Panc1 (cell line): ENCODE measurements at regions of chr3 and their contacts with region 1.

Region 1: DNA sequence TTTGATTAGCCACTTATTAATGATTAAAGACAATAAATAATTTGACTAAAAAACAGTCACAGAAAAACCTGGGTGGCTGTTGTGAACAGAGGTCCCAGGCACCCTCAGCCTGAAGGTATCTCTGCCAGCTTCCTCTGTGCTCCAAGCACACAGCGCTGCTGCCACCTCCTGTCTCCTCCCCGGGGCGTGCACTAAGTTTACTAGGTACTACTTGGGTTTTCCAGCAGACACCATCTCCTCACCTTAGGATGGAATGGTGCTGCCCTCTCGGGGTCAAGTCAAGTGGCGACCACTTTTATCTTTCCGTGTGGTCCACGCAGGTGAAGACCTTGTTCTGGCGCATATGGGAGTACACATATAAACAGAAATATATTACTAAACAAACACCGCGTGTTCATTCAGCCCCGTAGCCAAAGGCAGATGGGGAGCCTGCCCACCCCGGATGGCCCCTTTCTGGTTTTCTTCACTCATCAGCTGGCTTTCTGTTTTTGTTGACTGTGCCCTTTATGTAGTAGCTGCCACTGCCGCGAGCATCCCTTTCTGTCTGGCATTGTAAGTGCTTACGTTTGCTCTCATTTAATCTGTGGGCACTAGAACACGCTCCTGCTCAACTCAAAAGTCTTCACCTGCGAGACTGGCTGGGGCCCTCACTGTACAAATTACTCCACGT is 128.0 kb downstream of the LRIG1 start:
- DNase-seq: no peak
- ATAC-seq: peak; percentile 51; the same call in 1 of the 2 replicates
- H3K4me3 ChIP-seq: no peak overlapping the region
- H3K27ac ChIP-seq: no peak overlapping the region
- H3K4me1 ChIP-seq: no peaks in the 10 kb centered on the region
- H3K27me3 ChIP-seq: no peaks in the 10 kb centered on the region
- CTCF ChIP-seq: peak; percentile 26

Region 2: GRCh38 chr3:66276705-66277274 is 96.0 kb before region 1 on chr3:
- CTCF ChIA-PET with region 1: no interaction called
- POLR2A ChIA-PET with region 1: no interaction called
- in situ Hi-C with region 1: no loop called
- intact Hi-C with region 1: loop called (anchors 10 kb)
- DNase-seq: peak; percentile 32
- ATAC-seq: no peak
- H3K4me3 ChIP-seq: no peak overlapping the region
- H3K27ac ChIP-seq: no peak overlapping the region
- H3K4me1 ChIP-seq: no peaks in the 10 kb centered on the region
- H3K27me3 ChIP-seq: no peaks in the 10 kb centered on the region
- CTCF ChIP-seq: peak; percentile 61; the same call in 1 of the 2 replicates

Region 3: DNA sequence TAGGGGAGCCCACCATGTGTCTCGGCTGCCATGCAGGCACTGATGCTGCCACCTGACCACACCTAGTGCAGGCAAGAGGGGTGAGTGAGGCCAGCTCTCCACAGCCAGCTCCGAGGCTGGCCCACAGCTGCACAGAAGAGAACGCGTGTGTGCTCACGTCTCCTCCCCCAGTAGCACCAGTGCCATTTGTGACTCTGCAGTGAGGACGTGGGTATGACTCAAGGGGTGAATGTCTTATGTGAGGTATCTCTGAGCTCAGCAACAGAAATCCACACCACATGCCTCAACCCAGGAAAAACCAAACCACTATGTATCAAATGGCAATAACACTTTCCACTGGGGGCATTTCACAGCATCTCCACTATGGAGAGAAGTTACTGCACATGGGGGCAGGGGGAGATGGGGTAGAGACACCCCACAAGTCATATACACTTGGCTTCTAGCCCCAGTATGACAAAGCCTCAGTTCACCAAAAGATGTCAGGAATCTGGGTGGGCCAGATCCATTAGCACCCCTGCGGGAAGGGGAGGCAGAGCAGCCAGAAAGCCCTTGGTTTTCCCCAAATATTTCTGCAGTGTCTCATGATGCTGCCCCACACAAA is 40.4 kb after region 1 on chr3:
- CTCF ChIA-PET with region 1: no interaction called
- POLR2A ChIA-PET with region 1: no interaction called
- in situ Hi-C with region 1: no loop called
- intact Hi-C with region 1: no loop called
- DNase-seq: no peak
- ATAC-seq: no peak
- H3K4me3 ChIP-seq: no peak overlapping the region
- H3K27ac ChIP-seq: no peak overlapping the region
- H3K4me1 ChIP-seq: no peaks in the 10 kb centered on the region
- H3K27me3 ChIP-seq: no peaks in the 10 kb centered on the region
- CTCF ChIP-seq: no peak